ENCODE measurements at regions of chr2 and their contacts with region 1.

Region 1: DNA sequence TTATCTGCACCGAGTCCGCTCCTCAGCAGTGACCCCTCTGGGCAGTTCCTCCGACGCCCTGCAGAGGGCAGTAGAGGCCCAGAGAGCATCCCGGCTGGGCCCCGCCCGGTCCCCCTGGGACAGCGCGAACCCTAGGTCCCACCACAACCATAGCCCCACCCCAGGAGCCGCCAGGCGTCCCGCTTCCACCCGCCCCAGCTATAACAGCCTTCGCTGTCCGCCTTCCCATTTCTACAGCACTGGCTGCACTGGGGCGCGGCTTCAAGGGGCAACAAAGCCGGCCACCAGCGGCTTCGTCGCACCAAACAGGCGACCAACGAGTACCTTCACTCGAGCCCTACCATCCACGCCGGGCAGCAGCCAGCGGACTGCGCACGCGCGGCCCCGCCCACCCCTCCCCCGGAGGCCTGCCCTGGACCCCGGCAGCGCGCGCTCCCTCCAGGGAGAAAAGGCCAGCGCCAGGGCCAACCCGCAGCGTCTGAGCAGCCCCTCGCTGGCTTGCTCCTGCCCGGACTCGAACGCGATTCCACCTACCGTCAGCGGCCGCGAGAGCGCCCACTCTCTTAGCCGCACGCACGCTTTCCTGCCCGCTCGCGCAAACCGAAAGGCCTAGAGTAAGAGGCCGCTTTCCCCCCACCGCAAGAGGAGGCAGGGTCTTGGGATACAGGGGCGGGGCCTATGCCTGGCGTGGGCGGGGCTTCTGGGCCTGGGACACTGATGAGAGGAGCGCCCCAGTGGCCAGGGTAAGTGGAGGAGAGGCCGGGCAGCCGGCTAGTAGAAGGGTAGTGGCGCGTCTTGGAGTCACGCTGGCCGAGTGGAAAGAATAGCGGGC is at the start of gene NHEJ1:
- DNase-seq: peak; percentile 96
- H3K4me3 Mint-ChIP-seq: peak within 1 kb of the TSS; percentile 87
- H3K27ac Mint-ChIP-seq: peak within 1 kb of the TSS; percentile 92
- H3K4me1 Mint-ChIP-seq: peaks cover 14% of the 10 kb centered on the region
- H3K27me3 Mint-ChIP-seq: no peaks in the 10 kb centered on the region
- total RNA-seq, gene NHEJ1: 17.7 to 18.6 TPM

Region 2: GRCh38 chr2:218806346-218806978 is 353.9 kb before region 1 on chr2:
- CTCF ChIA-PET with region 1: no interaction called
- POLR2A ChIA-PET with region 1: no interaction called
- intact Hi-C with region 1: no loop called
- DNase-seq: no peak
- H3K4me3 Mint-ChIP-seq: no peak overlapping the region
- H3K27ac Mint-ChIP-seq: no peak overlapping the region
- H3K4me1 Mint-ChIP-seq: peaks cover 6% of the 10 kb centered on the region
- H3K27me3 Mint-ChIP-seq: peaks cover 17% of the 10 kb centered on the region

Region 3: DNA sequence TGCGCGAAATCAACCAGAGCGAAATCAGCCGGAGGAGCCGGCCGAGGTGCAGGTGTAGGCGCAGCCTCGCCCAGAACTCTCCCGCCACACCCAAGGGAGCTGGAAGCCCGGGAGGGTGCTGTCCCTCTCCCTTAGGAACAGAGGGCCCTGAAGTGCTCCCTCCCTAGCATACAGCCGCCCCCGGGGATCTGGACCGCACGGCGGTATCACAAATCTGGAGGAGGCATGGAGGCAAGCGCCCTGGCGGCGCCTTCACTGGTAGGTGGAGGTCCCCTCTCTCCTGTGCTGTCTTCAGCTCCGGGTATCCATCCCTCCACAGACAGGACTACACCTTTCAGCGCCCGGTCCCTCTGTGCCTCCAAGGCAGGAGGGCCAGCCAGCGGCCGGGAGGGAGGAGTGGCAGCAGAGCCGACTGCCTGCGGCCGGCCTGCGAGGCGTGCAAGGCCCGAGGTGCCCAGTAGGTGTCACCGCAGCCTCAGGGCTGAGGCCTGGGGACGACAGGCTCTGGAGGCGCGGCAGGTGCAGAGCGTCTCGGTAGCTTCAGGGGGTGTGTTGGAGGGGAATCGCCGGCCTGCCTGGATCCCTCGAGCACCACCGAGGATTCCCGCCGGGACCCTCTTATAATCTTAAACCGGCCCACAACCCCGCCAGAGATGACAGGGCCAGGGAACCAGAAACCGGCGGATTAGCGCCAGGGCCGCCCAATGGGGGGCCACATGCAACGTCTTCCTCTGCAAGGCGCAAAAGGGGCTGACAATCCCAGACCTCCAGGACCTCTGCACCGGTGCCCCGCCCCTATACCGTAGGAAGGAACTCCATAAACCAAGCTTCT is 102.5 kb before region 1 on chr2:
- CTCF ChIA-PET with region 1: interaction called, 82 read pairs
- POLR2A ChIA-PET with region 1: interaction called, 4 read pairs
- intact Hi-C with region 1: loop called (anchors 1 kb)
- DNase-seq: peak; percentile 87
- H3K4me3 Mint-ChIP-seq: peak overlapping the region; percentile 46
- H3K27ac Mint-ChIP-seq: no peak overlapping the region
- H3K4me1 Mint-ChIP-seq: peaks cover 26% of the 10 kb centered on the region
- H3K27me3 Mint-ChIP-seq: peaks cover 62% of the 10 kb centered on the region

Region 4: GRCh38 chr2:219119422-219120043 is 40.9 kb before region 1 on chr2:
- CTCF ChIA-PET with region 1: interaction called, 43 read pairs
- POLR2A ChIA-PET with region 1: no interaction called
- intact Hi-C with region 1: loop called (anchors 5 kb)
- DNase-seq: peak; percentile 71
- H3K4me3 Mint-ChIP-seq: no peak overlapping the region
- H3K27ac Mint-ChIP-seq: no peak overlapping the region
- H3K4me1 Mint-ChIP-seq: peaks cover 7% of the 10 kb centered on the region
- H3K27me3 Mint-ChIP-seq: no peaks in the 10 kb centered on the region

Region 5: GRCh38 chr2:219133976-219134375 is 26.4 kb before region 1 on chr2:
- CTCF ChIA-PET with region 1: no interaction called
- POLR2A ChIA-PET with region 1: no interaction called
- intact Hi-C with region 1: no loop called
- DNase-seq: no peak
- H3K4me3 Mint-ChIP-seq: no peak overlapping the region
- H3K27ac Mint-ChIP-seq: no peak overlapping the region
- H3K4me1 Mint-ChIP-seq: peaks cover 6% of the 10 kb centered on the region
- H3K27me3 Mint-ChIP-seq: no peaks in the 10 kb centered on the region

Region 6: DNA sequence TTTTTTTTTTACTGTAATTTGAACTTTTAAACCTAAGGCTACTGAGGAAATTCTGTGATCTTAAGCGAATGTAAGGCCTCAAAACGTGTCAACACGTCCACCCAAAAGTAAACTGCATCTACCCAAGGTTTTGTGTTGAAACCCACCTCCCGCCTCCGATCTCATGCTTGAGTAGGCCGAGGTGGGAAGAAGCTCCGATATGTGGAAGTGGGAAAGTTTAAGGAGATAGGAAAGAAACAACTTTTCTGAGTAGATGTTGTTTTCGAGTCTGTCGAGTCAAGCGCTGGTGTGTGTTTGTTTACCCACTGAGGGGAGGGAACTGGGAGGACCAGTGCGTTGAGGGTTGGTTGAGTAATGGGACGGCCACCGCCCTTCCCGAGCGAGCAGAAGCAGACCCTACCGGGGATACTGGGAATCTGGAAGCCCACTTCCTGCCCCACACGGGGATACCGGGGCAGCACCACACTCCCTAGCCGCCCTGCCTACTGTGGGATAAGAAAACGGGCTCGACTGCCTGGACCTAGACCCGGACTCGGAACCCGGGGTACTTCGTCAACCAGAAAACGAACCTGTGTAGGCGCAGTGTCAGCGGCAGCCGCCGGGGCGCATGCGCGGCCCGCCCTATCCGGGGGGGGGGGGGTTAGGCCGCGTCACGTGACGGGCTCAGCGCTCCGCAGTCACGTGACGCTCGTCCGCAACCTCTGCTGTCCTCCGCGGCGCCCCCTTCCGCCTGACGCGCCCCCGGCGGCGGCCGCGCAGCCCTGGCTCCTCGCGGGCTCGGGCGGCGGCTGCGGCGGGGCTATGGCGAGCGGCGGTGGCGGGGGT is 17.4 kb after region 1 on chr2 and contains the start of gene RETREG2:
- CTCF ChIA-PET with region 1: interaction called, 42 read pairs
- POLR2A ChIA-PET with region 1: interaction called, 8 read pairs
- intact Hi-C with region 1: loop called (anchors 1 kb)
- DNase-seq: peak; percentile 86
- H3K4me3 Mint-ChIP-seq: peak within 1 kb of the TSS; percentile 95
- H3K27ac Mint-ChIP-seq: peak within 1 kb of the TSS; percentile 99
- H3K4me1 Mint-ChIP-seq: peaks cover 52% of the 10 kb centered on the region
- H3K27me3 Mint-ChIP-seq: no peaks in the 10 kb centered on the region
- total RNA-seq, gene RETREG2: 60.3 to 67.9 TPM

Region 7: DNA sequence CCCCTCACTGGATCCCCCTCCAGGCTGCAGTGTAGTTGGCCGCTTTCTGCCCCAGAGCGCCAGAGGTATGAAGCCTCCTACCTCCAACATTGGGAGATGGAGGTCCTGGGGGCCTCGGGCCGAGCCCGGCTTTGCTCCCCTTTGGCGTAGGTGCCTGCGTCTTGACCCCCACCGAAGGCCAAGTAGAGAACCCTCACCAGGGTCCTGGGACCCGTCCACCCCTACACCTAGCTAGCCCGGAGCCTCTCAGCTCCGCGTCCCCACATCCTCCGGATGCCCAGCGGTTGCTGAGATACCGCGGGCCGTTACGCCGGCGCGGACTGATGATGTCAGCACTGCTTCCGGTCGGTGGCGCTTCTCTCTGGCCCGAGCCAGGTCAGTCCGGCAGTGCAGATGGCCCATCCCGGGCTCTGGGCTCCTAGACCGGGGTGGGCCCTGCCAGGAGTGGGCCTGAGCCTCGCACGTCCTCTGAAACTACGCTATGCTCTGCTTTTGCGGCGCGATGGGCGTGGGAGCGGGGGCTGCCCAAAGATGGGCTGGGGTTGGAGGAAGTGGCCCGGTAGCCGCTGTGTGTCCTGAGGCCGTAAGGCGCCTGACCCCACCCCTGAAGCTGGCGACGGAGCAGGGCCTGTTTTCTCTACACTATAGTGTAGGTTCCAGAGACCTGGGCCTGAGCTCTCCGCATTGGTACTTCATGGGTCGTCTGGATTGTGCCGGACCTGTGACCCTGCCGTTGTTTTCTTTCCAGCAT is 84.9 kb after region 1 on chr2 and contains the starts of genes GLB1L and STK16:
- CTCF ChIA-PET with region 1: interaction called, 10 read pairs
- POLR2A ChIA-PET with region 1: no interaction called
- intact Hi-C with region 1: loop called (anchors 1 kb)
- DNase-seq: peak; percentile 95
- H3K4me3 Mint-ChIP-seq: peak within 1 kb of the TSS; percentile 98
- H3K27ac Mint-ChIP-seq: peak within 1 kb of the TSS; percentile 98
- H3K4me1 Mint-ChIP-seq: peaks cover 61% of the 10 kb centered on the region
- H3K27me3 Mint-ChIP-seq: no peaks in the 10 kb centered on the region
- total RNA-seq, gene GLB1L: 4.8 to 4.9 TPM
- total RNA-seq, gene STK16: 37.1 to 37.8 TPM

Region 8: DNA sequence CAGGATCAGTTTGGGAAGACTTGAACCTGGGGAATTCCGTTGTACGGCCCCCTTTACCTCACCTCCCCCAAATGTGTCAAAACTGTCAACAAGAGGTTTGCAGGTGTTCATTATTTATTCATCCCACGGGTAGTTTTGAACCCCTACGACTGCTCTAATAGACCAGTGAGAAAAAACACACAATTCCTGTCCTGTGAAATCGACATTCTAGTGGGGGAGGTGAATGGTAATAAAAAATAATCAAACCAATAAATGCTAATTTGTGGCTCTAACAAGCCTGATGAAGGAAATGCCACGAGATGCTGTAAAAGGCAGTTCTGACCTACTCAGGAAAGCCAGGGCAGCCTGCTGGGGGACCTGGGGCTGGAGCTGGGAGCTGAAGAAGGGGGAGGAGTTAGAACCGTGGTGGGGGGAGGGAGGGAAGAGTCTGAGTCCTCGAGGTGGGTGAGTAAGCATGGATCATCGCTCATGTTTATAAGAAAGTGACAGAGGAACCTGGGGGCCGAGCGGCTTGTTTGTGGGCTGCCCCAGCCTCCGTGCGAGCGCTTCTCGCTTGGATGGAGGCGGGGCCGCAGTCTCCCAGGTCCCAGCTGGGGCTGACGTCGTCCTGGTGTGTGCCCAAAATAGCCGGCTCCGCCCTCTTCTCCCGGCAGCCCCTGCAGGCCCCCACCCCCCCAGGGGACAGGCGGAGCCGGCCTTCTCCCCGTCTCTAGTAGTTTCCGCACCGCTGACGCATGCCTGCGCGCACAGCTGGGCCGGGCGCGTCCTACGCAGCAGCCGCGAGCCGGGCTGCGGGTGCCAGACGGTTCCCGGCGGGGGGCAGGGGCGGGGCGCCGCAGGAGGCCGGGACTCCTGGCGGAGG is 118.5 kb after region 1 on chr2 and contains the start of gene DNAJB2:
- CTCF ChIA-PET with region 1: interaction called, 3 read pairs
- POLR2A ChIA-PET with region 1: no interaction called
- intact Hi-C with region 1: loop called (anchors 1 kb)
- DNase-seq: peak; percentile 100
- H3K4me3 Mint-ChIP-seq: peak within 1 kb of the TSS; percentile 80
- H3K27ac Mint-ChIP-seq: peak within 1 kb of the TSS; percentile 95
- H3K4me1 Mint-ChIP-seq: peaks cover 43% of the 10 kb centered on the region
- H3K27me3 Mint-ChIP-seq: no peaks in the 10 kb centered on the region
- total RNA-seq, gene DNAJB2: 37.3 to 39.1 TPM

Region 9: GRCh38 chr2:219388127-219388844 is 227.9 kb after region 1 on chr2:
- CTCF ChIA-PET with region 1: interaction called, 3 read pairs
- POLR2A ChIA-PET with region 1: no interaction called
- intact Hi-C with region 1: loop called (anchors 1 kb)
- DNase-seq: peak; percentile 99
- H3K4me3 Mint-ChIP-seq: peak overlapping the region; percentile 69
- H3K27ac Mint-ChIP-seq: peak overlapping the region; percentile 66
- H3K4me1 Mint-ChIP-seq: peaks cover 16% of the 10 kb centered on the region
- H3K27me3 Mint-ChIP-seq: no peaks in the 10 kb centered on the region